ENCODE measurements at regions of chr17 and their contacts with region 1.

Region 1: GRCh38 chr17:81132770-81133723 is 32.3 kb upstream of the PVALEF start:
- DNase-seq: peak; percentile 83 to 96
- H3K4me3 ChIP-seq: peak overlapping the region; percentile 51
- H3K4me3 Mint-ChIP-seq: peak overlapping the region; percentile 72
- H3K27ac Mint-ChIP-seq: peak overlapping the region; percentile 88
- H3K4me1 ChIP-seq: peaks cover 55% of the 10 kb centered on the region
- H3K4me1 Mint-ChIP-seq: peaks cover 5% of the 10 kb centered on the region
- H3K27me3 ChIP-seq: no peaks in the 10 kb centered on the region
- H3K27me3 Mint-ChIP-seq: no peaks in the 10 kb centered on the region
- CTCF ChIP-seq: no peak

Region 2: GRCh38 chr17:81119223-81120148 is 13.6 kb before region 1 on chr17:
- CTCF ChIA-PET with region 1: no interaction called
- POLR2A ChIA-PET with region 1: no interaction called
- intact Hi-C with region 1: loop called (anchors 2 kb)
- DNase-seq: peak; percentile 96 to 97
- H3K4me3 ChIP-seq: peak overlapping the region; percentile 55
- H3K4me3 Mint-ChIP-seq: peak overlapping the region; percentile 86
- H3K27ac Mint-ChIP-seq: peak overlapping the region; percentile 79
- H3K4me1 ChIP-seq: no peaks in the 10 kb centered on the region; the same call in 1 of the 2 replicates
- H3K4me1 Mint-ChIP-seq: peaks cover 8% of the 10 kb centered on the region
- H3K27me3 ChIP-seq: no peaks in the 10 kb centered on the region
- H3K27me3 Mint-ChIP-seq: no peaks in the 10 kb centered on the region
- CTCF ChIP-seq: no peak

Region 3: DNA sequence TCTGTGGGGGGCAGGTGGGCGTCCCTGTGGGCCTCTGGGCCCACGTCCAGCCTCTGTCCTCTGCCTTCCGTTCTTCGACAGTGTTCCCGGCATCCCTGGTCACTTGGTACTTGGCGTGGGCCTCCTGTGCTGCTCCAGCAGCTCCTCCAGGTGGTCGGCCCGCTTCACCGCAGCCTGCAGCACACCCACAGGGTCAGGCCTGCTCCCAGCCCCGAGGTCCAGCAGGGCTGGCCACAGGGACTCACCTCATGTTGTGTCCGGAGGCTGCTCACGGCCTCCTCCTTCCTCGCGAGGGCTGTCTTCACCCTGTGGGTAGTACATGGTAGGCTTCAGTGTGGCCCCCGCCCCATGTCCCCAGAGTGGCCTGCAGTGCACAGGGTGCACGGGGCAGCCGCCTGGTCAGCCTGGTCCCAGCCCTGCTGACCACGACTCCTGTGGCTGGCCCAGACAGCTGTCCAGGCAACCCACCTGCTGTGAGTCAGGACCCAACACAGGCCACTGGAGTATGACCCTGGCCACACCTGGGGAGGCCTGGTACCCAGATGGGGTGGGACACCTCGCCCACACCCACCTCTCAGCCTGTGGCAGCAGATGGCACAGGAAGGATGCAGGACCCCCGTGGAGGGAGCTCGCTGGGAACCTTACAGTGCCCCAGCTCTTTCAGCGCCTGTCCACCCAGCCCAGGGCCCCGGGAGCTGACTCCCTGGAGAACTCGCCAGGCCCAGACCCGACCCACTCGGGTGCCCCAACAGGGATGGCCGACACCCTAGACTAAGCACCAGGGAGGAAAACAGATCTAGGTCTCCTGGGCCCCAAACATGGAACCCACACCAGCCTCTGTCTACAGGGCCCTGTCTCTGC is 56.9 kb after region 1 on chr17:
- CTCF ChIA-PET with region 1: no interaction called
- POLR2A ChIA-PET with region 1: no interaction called
- intact Hi-C with region 1: no loop called
- DNase-seq: peak in 1 of 2 experiments; percentile 68
- H3K4me3 ChIP-seq: no peak overlapping the region
- H3K4me3 Mint-ChIP-seq: no peak overlapping the region
- H3K27ac Mint-ChIP-seq: no peak overlapping the region
- H3K4me1 ChIP-seq: no peaks in the 10 kb centered on the region
- H3K4me1 Mint-ChIP-seq: no peaks in the 10 kb centered on the region
- H3K27me3 ChIP-seq: no peaks in the 10 kb centered on the region
- H3K27me3 Mint-ChIP-seq: no peaks in the 10 kb centered on the region
- CTCF ChIP-seq: peak; percentile 65 to 69

Region 4: DNA sequence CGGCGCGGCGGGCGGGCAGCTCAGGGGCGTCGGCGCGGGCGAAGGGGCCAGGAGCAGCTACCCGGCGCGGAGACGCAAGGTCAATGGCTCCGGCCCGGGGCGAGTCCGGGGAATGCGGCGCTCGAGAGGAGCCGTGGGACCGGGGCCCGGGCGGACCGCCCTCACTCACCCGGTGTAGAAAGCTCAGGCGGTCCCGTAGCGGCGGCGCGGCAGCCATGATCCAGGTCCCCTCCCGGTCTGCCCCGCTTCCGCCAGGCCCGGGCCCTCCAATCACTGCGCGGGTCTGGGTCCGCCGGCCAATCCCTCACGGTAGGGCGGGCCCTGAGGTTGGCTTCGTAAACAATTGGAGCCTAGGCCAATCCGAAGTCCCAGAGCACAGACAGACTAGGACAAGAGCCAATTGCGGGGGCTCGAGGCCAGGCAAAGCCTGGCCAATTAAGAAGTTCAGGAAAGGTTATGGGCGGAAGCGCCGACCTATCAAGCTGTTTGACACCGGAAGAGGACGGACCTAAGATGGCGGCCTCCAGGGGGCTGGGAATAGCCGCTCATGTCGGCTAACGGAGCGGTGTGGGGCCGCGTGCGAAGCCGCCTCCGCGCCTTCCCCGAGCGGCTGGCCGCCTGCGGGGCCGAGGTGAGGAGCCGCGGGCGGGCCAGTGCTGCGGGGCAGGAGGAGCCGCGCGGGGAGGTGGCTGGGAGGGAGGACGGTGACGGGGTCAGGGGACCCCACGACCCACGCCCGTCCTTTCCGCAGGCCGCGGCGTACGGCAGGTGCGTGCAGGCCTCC is 106.0 kb after region 1 on chr17 and contains the starts of genes NDUFAF8 and TEPSIN:
- CTCF ChIA-PET with region 1: no interaction called
- POLR2A ChIA-PET with region 1: no interaction called
- intact Hi-C with region 1: loop called (anchors 2 kb)
- DNase-seq: peak; percentile 98 to 99
- H3K4me3 ChIP-seq: peak within 1 kb of the TSS; percentile 91
- H3K4me3 Mint-ChIP-seq: peak within 1 kb of the TSS; percentile 82
- H3K27ac Mint-ChIP-seq: peak within 1 kb of the TSS; percentile 71
- H3K4me1 ChIP-seq: peaks cover 27% of the 10 kb centered on the region
- H3K4me1 Mint-ChIP-seq: peaks cover 19% of the 10 kb centered on the region
- H3K27me3 ChIP-seq: no peaks in the 10 kb centered on the region
- H3K27me3 Mint-ChIP-seq: no peaks in the 10 kb centered on the region
- CTCF ChIP-seq: no peak
- total RNA-seq, gene NDUFAF8: 65.0 and 66.7 TPM in 2 replicates
- total RNA-seq, gene TEPSIN: 38.7 and 40.3 TPM in 2 replicates

Measured in Caco-2 (cell line).